GM12878 (cell line): ENCODE measurements at regions of chr21 and their contacts with region 1.

Region 1: GRCh38 chr21:33380483-33380998 is 22.7 kb upstream of the IFNGR2 start:
- DNase-seq: peak; percentile 95
- ATAC-seq: peak; percentile 70
- H3K4me3 ChIP-seq: no peak overlapping the region; the same call in 1 of the 2 replicates
- H3K27ac ChIP-seq: peak overlapping the region; percentile 95
- H3K4me1 ChIP-seq: peaks cover 54% of the 10 kb centered on the region
- H3K27me3 ChIP-seq: no peaks in the 10 kb centered on the region
- CTCF ChIP-seq: no peak
- EP300 ChIP-seq: peak; percentile 30 to 48; a peak in 2 of 4 replicates
- POLR2A ChIP-seq: peak; percentile 69; the same call in 1 of the 2 replicates
- RAD21 ChIP-seq: no peak

Region 2: GRCh38 chr21:33205476-33205875 is 175.1 kb before region 1 on chr21:
- CTCF ChIA-PET with region 1: interaction called, 5 read pairs
- POLR2A ChIA-PET with region 1: interaction called, 5 read pairs
- RAD21 ChIA-PET with region 1: interaction called, 12 read pairs
- SMC1A ChIA-PET with region 1: interaction called, 7 read pairs
- in situ Hi-C with region 1: loop called (anchors 5 kb)
- intact Hi-C with region 1: loop called (anchors 2 kb)
- DNase-seq: no peak
- ATAC-seq: peak; percentile 29
- H3K4me3 ChIP-seq: no peak overlapping the region
- H3K27ac ChIP-seq: peak overlapping the region; percentile 51
- H3K4me1 ChIP-seq: peaks cover 19% of the 10 kb centered on the region
- H3K27me3 ChIP-seq: no peaks in the 10 kb centered on the region
- CTCF ChIP-seq: peak in 1 of 3 experiments; percentile 8; a peak in 1 of 6 replicates
- EP300 ChIP-seq: no peak
- POLR2A ChIP-seq: no peak
- RAD21 ChIP-seq: no peak

Region 3: DNA sequence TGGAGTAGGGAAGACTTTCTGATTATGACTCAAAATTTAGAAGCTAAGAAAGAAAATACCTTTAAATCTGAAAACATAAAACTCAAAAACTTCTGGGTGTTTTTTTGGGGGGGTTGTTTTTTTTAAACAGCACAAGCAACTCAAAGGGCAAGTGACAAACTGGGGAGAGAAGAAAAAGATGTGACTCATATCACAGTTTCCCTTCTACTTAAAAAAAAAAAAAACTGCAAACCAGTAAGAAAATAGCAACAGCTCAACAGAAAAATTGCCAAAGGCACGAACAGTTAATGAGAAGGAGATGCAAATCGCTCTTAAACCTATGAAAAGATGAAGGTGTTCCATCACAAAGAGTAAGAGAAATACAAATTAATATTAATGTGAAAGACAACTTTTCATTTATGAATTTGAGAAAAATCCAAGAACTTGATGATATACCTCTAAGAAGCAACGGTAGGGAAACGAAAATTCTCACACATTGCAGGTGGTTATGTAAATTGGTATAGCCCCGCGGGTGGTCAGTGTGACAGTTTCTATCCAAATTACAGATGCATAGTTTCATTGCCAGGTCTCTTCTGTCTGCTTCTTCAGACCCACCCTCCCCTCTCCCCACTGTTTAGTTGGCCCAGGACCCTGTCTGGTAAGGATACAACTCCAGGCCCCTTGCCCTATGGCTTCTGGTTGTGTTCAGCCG is 141.8 kb before region 1 on chr21:
- CTCF ChIA-PET with region 1: interaction called, 6 read pairs
- POLR2A ChIA-PET with region 1: interaction called, 3 read pairs
- RAD21 ChIA-PET with region 1: interaction called, 12 read pairs
- SMC1A ChIA-PET with region 1: interaction called, 6 read pairs
- in situ Hi-C with region 1: no loop called
- intact Hi-C with region 1: no loop called
- DNase-seq: peak; percentile 76
- ATAC-seq: peak; percentile 79
- H3K4me3 ChIP-seq: peak overlapping the region; percentile 66
- H3K27ac ChIP-seq: peak overlapping the region; percentile 86
- H3K4me1 ChIP-seq: peaks cover 56% of the 10 kb centered on the region
- H3K27me3 ChIP-seq: no peaks in the 10 kb centered on the region
- CTCF ChIP-seq: no peak
- EP300 ChIP-seq: peak; percentile 79 to 96
- POLR2A ChIP-seq: 0 out of 2 replicates have a peak, but pooled peaks have one; percentile 40
- RAD21 ChIP-seq: 0 out of 2 replicates have a peak, but pooled peaks have one; percentile 10

Region 4: DNA sequence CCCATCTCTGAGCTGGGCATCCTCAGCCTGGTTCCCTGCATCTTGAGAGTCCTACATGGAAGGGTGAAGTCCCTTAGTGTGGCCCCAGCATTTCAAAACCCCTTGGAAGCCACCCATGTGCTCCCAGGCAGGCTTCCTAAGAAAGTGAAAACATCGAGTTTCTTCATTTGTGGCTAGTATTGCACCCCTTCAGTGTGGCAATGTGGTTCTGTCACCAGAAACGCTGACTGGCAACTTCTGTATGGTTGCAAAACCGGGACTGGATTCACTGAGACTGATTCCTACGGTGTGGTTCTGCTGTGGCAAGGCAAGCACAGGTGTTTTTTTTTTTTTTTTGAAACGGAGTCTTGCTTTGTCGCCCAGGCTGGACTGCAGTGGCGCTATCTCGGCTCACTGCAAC is 13.7 kb after region 1 on chr21:
- CTCF ChIA-PET with region 1: interaction called, 21 read pairs
- POLR2A ChIA-PET with region 1: interaction called, 7 read pairs
- RAD21 ChIA-PET with region 1: interaction called, 12 read pairs
- SMC1A ChIA-PET with region 1: interaction called, 13 read pairs
- in situ Hi-C with region 1: no loop called
- intact Hi-C with region 1: no loop called
- DNase-seq: no peak
- ATAC-seq: peak; percentile 81
- H3K4me3 ChIP-seq: no peak overlapping the region
- H3K27ac ChIP-seq: no peak overlapping the region
- H3K4me1 ChIP-seq: peaks cover 12% of the 10 kb centered on the region
- H3K27me3 ChIP-seq: no peaks in the 10 kb centered on the region
- CTCF ChIP-seq: no peak
- EP300 ChIP-seq: no peak
- POLR2A ChIP-seq: no peak
- RAD21 ChIP-seq: no peak

Region 5: DNA sequence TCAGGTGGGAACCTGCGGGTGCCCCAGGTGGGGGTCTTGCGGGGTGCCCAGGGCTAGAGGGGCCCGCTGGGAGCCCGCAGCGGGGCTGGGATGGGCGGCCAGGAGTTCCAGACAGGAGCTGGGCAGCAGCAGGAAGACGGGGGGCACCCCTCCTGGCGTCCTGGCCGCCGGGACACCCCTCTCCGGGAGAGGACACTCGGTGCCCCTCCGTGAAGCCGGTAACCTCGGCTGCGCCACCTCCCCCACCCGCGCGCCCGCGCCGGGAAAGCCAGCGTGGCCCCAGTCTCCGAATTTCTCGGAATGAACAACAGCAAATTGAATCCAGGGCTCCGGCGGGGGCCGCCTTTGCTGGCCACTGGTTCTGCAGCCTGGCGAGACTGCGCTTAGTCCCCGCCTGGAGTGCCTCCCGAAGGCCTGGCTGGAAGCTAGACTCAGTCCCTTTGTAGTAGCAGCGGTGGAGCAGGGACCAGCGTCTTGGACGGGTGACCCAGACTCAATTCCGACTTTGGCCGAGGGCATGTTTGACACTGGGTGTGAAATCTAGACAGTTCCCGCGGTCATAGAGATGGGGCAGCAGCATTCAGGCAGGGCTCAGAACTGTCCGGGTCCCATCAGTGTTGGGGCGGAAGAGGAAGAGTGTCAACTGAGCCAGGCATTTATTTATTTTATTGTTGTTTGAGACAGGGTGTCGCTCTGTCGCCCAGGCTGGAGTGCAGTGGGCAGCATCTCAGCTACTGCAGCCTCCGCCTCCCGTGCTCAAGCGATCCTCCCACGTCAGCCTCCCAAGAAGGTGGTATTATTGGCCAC is 23.4 kb after region 1 on chr21:
- CTCF ChIA-PET with region 1: interaction called, 20 read pairs
- POLR2A ChIA-PET with region 1: interaction called, 48 read pairs
- RAD21 ChIA-PET with region 1: interaction called, 55 read pairs
- SMC1A ChIA-PET with region 1: interaction called, 72 read pairs
- in situ Hi-C with region 1: no loop called
- intact Hi-C with region 1: loop called (anchors 1 kb)
- DNase-seq: no peak
- ATAC-seq: peak; percentile 60
- H3K4me3 ChIP-seq: peak overlapping the region; percentile 84
- H3K27ac ChIP-seq: peak overlapping the region; percentile 97
- H3K4me1 ChIP-seq: peaks cover 15% of the 10 kb centered on the region
- H3K27me3 ChIP-seq: no peaks in the 10 kb centered on the region
- CTCF ChIP-seq: no peak
- EP300 ChIP-seq: no peak
- POLR2A ChIP-seq: peak; percentile 77
- RAD21 ChIP-seq: no peak

Region 6: GRCh38 chr21:33412832-33413519 is 32.4 kb after region 1 on chr21:
- CTCF ChIA-PET with region 1: interaction called, 5 read pairs
- POLR2A ChIA-PET with region 1: interaction called, 48 read pairs
- RAD21 ChIA-PET with region 1: interaction called, 55 read pairs
- SMC1A ChIA-PET with region 1: interaction called, 72 read pairs
- in situ Hi-C with region 1: no loop called
- intact Hi-C with region 1: no loop called
- DNase-seq: no peak
- ATAC-seq: peak; percentile 84
- H3K4me3 ChIP-seq: peak overlapping the region; percentile 10; the same call in 1 of the 2 replicates
- H3K27ac ChIP-seq: peak overlapping the region; percentile 22; the same call in 1 of the 2 replicates
- H3K4me1 ChIP-seq: peaks cover 22% of the 10 kb centered on the region
- H3K27me3 ChIP-seq: no peaks in the 10 kb centered on the region
- CTCF ChIP-seq: no peak
- EP300 ChIP-seq: no peak
- POLR2A ChIP-seq: peak; percentile 57
- RAD21 ChIP-seq: no peak

Region 7: GRCh38 chr21:33434770-33435360 is 54.3 kb after region 1 on chr21:
- CTCF ChIA-PET with region 1: interaction called, 11 read pairs
- POLR2A ChIA-PET with region 1: interaction called, 12 read pairs
- RAD21 ChIA-PET with region 1: interaction called, 148 read pairs
- SMC1A ChIA-PET with region 1: interaction called, 33 read pairs
- in situ Hi-C with region 1: no loop called
- intact Hi-C with region 1: loop called (anchors 1 kb)
- DNase-seq: peak; percentile 99
- ATAC-seq: peak; percentile 89
- H3K4me3 ChIP-seq: no peak overlapping the region
- H3K27ac ChIP-seq: peak overlapping the region; percentile 92
- H3K4me1 ChIP-seq: peaks cover 41% of the 10 kb centered on the region
- H3K27me3 ChIP-seq: no peaks in the 10 kb centered on the region
- CTCF ChIP-seq: no peak
- EP300 ChIP-seq: peak in 1 of 2 experiments; percentile 77; a peak in 2 of 4 replicates
- POLR2A ChIP-seq: no peak
- RAD21 ChIP-seq: no peak